Panc1 (cell line): ENCODE measurements at regions of chr12 and their contacts with region 1.

Region 1: GRCh38 chr12:49866859-49867579 is 24.1 kb upstream of the BCDIN3D start:
- DNase-seq: peak; percentile 43
- ATAC-seq: peak; percentile 78
- H3K4me3 ChIP-seq: no peak overlapping the region
- H3K27ac ChIP-seq: peak overlapping the region; percentile 56
- H3K4me1 ChIP-seq: peaks cover 28% of the 10 kb centered on the region
- H3K27me3 ChIP-seq: no peaks in the 10 kb centered on the region
- CTCF ChIP-seq: peak; percentile 97

Region 2: GRCh38 chr12:49903695-49904423 is 36.8 kb after region 1 on chr12 and contains the start of gene FAIM2:
- CTCF ChIA-PET with region 1: no interaction called
- POLR2A ChIA-PET with region 1: interaction called, 11 read pairs
- in situ Hi-C with region 1: no loop called
- intact Hi-C with region 1: no loop called
- DNase-seq: no peak
- ATAC-seq: no peak
- H3K4me3 ChIP-seq: no peak within 1 kb of the TSS; a peak in 1 of 4 replicates
- H3K27ac ChIP-seq: no peak within 1 kb of the TSS
- H3K4me1 ChIP-seq: no peaks in the 10 kb centered on the region
- H3K27me3 ChIP-seq: no peaks in the 10 kb centered on the region
- CTCF ChIP-seq: no peak
- total RNA-seq, gene FAIM2: 0.49 TPM

Region 3: DNA sequence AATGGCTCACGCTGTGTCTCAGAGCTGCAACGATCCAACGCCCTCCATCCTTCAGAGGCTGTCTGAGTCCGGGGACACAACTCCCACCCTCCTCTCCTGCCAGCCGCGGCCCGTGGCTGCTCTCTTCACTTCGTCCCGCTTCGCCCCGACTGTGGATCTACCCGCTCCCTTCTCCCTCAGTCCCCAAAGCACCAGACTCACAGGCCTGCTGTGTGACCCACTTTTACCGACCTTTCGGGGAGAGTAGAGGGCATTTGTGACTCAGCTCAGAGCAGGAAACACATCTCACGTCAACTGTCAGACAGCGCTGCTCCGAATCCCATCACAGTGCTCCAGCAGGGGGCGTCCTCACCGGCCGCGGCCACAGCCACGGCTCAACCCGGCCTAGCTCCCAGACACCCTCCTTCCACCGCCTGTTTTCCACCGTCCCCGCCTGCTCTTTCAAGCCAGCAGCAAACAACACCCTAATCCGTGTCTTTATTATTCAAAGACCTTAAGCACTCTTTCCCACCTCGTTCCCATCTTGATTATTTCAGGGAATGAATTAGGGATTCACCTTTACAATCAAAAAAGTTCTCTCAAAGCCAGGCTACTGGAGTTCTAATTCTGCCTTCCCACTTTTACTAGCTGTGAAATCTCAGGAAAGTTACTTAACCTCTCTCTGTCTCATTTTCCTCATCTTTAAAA is 78.5 kb after region 1 on chr12:
- CTCF ChIA-PET with region 1: interaction called, 3 read pairs
- POLR2A ChIA-PET with region 1: no interaction called
- in situ Hi-C with region 1: no loop called
- intact Hi-C with region 1: loop called (anchors 5 kb)
- DNase-seq: peak; percentile 61
- ATAC-seq: peak; percentile 99
- H3K4me3 ChIP-seq: peak overlapping the region; percentile 34 to 53
- H3K27ac ChIP-seq: peak overlapping the region; percentile 88
- H3K4me1 ChIP-seq: peaks cover 13% of the 10 kb centered on the region
- H3K27me3 ChIP-seq: no peaks in the 10 kb centered on the region
- CTCF ChIP-seq: peak; percentile 99

Region 4: GRCh38 chr12:50055831-50056638 is 189.0 kb after region 1 on chr12:
- CTCF ChIA-PET with region 1: interaction called, 3 read pairs
- POLR2A ChIA-PET with region 1: no interaction called
- in situ Hi-C with region 1: no loop called
- intact Hi-C with region 1: loop called (anchors 10 kb)
- DNase-seq: no peak
- ATAC-seq: peak; percentile 69
- H3K4me3 ChIP-seq: peak overlapping the region in 1 of 2 experiments; percentile 25; a peak in 1 of 4 replicates
- H3K27ac ChIP-seq: no peak overlapping the region
- H3K4me1 ChIP-seq: peaks cover 13% of the 10 kb centered on the region
- H3K27me3 ChIP-seq: 0 out of 2 replicates have a peak, but pooled peaks cover 4% of the 10 kb centered on the region
- CTCF ChIP-seq: peak; percentile 97